Activated B cell treated with CpG ODN at 0.5 μM for 24 hours (primary cell): ENCODE measurements at regions of chr17 and their contacts with region 1.

Region 1: GRCh38 chr17:43745541-43745940 is 13.1 kb downstream of the SOST start:
- DNase-seq: no peak
- ATAC-seq: no peak
- H3K4me3 Mint-ChIP-seq: no peak overlapping the region
- H3K27ac Mint-ChIP-seq: no peak overlapping the region
- H3K4me1 Mint-ChIP-seq: peaks cover 7% of the 10 kb centered on the region
- H3K27me3 Mint-ChIP-seq: peaks cover 50% of the 10 kb centered on the region
- CTCF ChIP-seq: no peak

Region 2: GRCh38 chr17:43634591-43635125 is 110.9 kb before region 1 on chr17:
- CTCF ChIA-PET with region 1: no interaction called
- POLR2A ChIA-PET with region 1: interaction called, 10 read pairs
- intact Hi-C with region 1: no loop called
- DNase-seq: no peak
- ATAC-seq: no peak
- H3K4me3 Mint-ChIP-seq: no peak overlapping the region
- H3K27ac Mint-ChIP-seq: no peak overlapping the region
- H3K4me1 Mint-ChIP-seq: no peaks in the 10 kb centered on the region
- H3K27me3 Mint-ChIP-seq: peaks cover 11% of the 10 kb centered on the region
- CTCF ChIP-seq: no peak

Region 3: DNA sequence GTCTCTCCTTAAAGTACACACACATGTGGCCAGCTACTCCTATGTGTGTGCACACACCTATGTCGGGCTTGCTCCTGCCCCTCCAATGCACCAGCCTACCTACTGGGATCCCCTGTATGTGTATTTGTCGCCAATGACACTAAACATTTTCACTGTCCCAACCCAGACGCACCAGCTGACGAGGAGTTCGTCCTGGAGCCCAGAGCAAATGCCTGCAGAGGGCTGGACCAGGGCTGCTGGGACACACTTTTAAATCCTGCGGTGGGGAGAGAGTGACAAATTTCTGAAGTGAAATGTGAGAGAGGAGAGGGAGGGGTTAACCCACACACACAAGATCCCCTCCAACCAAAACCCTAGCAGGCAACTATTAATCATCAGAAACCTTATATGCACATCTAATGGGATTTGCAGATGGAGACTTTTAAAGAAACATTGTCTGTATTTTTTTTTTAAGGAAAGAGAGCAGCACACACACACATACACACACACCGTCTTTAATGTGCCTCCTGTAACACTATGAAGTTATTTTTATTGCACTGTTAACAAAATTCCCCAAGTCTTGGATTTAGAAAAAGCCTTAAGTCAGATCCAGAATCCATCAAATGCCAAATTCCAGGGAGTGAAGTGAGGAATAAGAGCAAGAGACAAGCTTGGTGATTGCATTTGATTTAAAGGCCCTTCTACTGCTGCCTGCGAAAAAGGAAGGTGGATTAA is 83.7 kb before region 1 on chr17 and contains the start of gene MEOX1:
- CTCF ChIA-PET with region 1: no interaction called
- POLR2A ChIA-PET with region 1: no interaction called
- intact Hi-C with region 1: no loop called
- DNase-seq: no peak
- ATAC-seq: no peak
- H3K4me3 Mint-ChIP-seq: no peak within 1 kb of the TSS
- H3K27ac Mint-ChIP-seq: no peak within 1 kb of the TSS
- H3K4me1 Mint-ChIP-seq: no peaks in the 10 kb centered on the region
- H3K27me3 Mint-ChIP-seq: peaks cover 24% of the 10 kb centered on the region
- CTCF ChIP-seq: no peak
- total RNA-seq, gene MEOX1: not detected in 2 replicates